ENCODE measurements at regions of chr3 and their contacts with region 1.

Region 1: GRCh38 chr3:46078712-46079400 is 51.6 kb upstream of the XCR1 start:
- DNase-seq: peak; percentile 92
- H3K4me3 ChIP-seq: peak overlapping the region; percentile 61
- H3K27ac ChIP-seq: no peak overlapping the region
- H3K4me1 ChIP-seq: no peaks in the 10 kb centered on the region
- H3K27me3 ChIP-seq: no peaks in the 10 kb centered on the region

Region 2: DNA sequence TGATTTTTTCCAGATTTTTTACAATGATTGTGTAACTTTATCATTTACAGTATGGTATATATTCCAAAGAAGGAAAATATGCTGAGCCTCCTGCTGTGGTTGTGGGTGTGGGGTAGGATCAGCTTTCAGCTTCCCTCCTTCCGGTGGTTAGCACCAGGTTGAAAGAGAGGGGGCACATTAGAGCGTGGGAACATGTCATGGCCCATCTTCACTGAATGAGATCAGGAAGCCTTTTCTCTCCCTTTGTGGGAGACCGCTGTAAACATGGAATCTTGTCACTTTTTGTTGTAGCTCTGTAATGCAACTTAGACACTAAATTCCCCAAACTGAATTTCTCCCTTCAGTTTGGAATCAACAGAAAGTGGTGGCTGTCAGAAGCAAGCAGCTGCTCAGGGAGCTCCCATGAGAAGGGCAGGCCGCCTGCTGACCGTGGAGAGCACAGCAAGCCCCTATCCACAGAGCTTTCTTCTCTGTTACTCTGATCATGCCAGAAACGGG is 571.0 kb before region 1 on chr3:
- in situ Hi-C with region 1: loop called (anchors 25 kb)
- DNase-seq: no peak
- H3K4me3 ChIP-seq: no peak overlapping the region
- H3K27ac ChIP-seq: peak overlapping the region; percentile 92; the same call in 1 of the 2 replicates
- H3K4me1 ChIP-seq: peaks cover 17% of the 10 kb centered on the region
- H3K27me3 ChIP-seq: no peaks in the 10 kb centered on the region

Region 3: DNA sequence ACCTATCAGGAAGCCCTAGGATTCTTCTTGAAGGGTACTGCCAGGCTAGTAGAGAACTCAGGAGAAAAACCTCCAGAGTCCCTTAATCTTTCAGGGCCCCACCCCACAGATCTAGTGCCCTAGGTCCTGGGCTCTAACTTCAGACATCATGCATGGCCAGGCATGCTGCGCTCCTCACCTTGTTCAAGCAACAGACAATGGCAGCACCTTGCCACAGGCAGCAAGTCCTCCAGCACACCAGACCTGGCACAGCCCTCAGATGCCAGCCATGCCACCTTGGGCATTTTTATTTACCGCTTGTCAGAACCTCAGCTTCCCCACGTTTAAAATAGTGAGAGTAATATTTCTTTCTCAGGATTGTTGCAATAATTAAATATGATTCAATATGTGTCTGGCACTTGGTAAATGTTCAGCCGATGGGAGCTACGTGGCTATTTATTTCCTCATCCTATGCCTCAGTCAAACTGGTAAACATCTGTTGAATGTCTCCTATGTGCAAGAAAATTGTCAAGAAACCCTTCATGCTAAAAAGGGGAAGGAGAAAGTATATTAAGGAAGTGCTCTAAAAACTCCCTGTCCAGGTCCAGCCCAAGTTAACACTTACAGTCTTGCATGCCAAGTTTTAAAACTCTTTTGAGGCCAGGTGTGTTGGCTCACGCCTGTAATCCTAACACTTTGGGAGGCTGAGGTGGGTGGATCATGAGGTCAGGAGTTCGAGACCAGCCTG is 143.7 kb after region 1 on chr3:
- in situ Hi-C with region 1: no loop called
- DNase-seq: no peak
- H3K4me3 ChIP-seq: no peak overlapping the region
- H3K27ac ChIP-seq: no peak overlapping the region
- H3K4me1 ChIP-seq: no peaks in the 10 kb centered on the region
- H3K27me3 ChIP-seq: peaks cover 39% of the 10 kb centered on the region

Region 4: DNA sequence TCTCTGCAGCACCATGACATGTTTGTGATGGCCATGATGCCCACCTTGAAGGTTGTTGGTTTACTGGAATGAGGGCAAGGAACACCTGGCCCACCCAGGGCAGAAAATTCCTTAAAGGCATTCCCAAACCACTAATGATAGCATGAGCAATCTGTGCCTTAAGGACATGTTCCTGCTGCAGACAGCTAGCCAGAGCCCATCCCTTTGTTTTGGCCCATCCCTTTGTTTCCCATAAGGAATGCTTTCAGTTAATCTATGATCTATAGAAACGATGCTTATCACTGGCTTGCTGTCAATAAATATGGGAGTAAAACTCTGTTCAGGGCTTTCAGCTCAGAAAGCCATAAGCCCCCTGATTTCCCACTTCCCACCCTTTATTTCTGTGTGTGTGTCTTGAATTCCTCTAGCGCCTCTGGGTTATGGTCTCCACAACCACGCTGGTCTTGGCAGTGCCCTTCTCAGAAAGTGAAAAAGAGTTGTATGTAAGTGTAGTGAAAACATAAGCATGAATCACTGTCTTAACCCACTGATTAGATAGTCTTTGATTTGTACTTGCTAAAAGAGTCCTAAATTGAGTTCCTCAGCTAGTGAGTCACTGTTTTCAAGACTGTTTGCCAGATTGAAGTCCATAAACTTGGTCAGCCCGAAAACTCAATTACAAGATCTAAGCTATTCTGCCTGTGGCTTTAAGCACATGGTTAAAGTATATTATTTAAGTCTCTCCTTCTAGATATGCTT is 256.1 kb after region 1 on chr3:
- in situ Hi-C with region 1: no loop called
- DNase-seq: peak; percentile 35
- H3K4me3 ChIP-seq: no peak overlapping the region
- H3K27ac ChIP-seq: no peak overlapping the region
- H3K4me1 ChIP-seq: no peaks in the 10 kb centered on the region
- H3K27me3 ChIP-seq: peaks cover 33% of the 10 kb centered on the region; the same call in 1 of the 2 replicates

Region 5: DNA sequence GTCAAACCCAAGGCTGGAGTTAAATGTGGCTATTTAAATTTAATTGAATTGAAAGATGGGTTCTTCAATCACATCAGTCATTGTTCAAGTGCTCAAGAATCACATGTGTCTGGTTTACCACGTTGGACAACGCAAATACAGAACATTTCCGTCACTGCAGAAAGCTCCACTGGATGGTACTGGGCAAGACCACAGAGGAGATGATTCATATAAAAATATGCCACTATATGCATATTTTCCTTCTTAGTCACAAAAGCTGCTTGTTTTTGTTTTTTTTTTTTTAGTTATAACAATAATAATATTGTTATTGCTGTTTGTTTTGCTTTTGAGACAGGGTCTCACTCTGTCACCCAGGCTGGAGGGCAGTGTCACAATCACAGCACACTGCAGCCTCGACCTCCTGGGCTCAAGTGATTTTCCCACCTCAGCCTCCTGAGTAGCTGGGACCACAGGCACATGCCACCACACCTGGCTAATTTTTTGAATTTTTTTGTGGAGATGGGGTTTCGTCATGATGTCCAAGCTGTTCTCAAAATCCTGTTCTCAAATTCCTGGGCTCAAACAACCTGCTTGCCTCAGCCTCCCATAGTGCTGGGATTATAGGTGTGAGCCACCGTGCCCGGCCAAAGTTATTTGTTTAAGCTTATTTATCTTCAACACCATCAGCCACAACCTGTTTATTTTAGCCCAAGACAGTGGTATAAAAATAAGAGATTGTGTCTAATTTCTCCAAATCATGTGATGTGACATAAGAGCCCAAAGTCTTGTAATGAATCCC is 438.3 kb after region 1 on chr3:
- in situ Hi-C with region 1: no loop called
- DNase-seq: peak; percentile 81
- H3K4me3 ChIP-seq: no peak overlapping the region
- H3K27ac ChIP-seq: peak overlapping the region; percentile 41; the same call in 1 of the 2 replicates
- H3K4me1 ChIP-seq: peaks cover 19% of the 10 kb centered on the region
- H3K27me3 ChIP-seq: no peaks in the 10 kb centered on the region

Measured in GM23248 (cell line).